Posterior cingulate gyrus (tissue), 11 donors: ENCODE measurements at regions of chr13 and their contacts with region 1.

Region 1: GRCh38 chr13:50081679-50082425 is 66.6 kb downstream of the KCNRG start:
- DNase-seq: peak; percentile 98 to 100 (median 99)

Region 2: DNA sequence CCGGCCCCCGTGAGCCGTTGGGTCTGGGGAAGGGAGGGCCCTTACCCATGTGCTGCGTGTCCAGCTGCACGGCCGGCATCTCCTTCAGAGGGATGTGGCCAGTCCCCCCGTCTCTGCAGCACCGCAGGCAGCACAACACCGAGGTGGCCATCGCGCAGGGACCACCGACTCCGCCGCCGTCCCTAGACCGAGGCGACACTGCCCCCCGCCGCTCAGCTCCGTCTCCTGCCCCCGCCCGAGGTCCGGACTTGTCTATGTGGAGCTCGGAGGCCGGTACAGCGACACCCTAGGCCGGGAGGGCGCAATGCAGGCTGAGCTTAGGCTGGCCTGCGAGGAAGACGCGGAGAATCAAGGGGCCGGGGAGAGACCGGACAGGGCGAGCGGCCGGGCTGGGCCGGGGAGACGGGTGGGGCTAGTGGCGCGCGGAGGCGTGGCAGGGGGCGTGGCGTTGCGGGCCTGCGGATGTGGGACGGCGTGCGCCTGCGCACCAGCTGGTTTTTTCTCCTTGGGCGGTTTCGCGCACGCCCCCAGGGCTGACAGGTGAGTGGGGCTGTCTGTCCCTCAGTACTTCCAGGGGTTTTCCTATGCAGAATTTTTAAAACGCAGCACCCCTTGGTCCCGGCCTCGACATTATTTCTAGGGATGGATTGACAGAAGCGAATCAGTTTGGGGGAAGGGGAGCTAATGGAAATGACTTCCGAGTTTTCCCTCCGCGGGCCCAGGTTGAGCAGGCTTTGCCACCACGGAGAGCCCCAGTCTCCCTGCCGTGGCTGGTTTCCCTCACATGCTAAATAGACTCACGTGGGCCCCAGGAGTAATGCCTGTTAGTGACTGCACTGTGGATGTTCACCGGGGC is 145.5 kb before region 1 on chr13 and contains the start of gene SPRYD7:
- intact Hi-C with region 1: loop called (anchors 5 kb)
- DNase-seq: peak; percentile 95 to 100 (median 98)

Region 3: DNA sequence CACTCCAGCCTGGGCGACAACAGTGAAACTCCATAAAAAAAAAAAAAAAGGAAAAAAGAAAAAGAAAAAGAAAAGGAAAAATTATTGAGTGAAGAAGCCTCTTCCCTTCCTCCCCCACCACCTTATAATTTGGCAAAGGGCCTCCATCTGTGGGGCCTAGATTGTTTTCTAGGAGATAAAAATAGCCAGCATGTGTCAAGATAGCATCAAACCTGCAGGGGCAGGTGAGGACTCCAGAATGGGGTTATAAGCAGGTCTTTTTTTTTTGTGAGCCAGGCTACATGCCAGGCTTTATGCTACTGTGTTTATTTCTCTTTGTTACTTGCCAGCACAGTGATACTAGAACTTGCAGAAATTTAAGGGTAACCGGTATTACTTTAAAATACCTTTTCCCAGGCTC is 96.7 kb before region 1 on chr13:
- intact Hi-C with region 1: no loop called
- DNase-seq: no peak

Region 4: DNA sequence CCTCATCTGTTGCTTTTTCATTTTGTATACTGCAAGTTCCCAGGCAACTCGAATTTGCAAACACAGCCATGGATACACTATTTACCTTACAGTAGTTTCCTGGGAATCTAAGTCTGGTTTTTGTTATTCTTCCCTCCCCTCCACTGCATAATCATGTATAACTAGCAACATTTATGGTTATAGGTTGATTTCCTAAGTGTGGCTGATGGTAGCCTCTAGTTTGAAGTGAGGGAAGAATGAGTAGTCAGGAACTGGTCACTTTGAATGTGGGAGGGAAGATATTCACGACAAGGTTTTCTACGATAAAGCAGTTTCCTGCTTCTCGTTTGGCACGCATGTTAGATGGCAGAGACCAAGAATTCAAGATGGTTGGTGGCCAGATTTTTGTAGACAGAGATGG is 66.6 kb before region 1 on chr13 and contains the start of gene KCNRG:
- intact Hi-C with region 1: loop called (anchors 5 kb)
- DNase-seq: no peak

Region 5: GRCh38 chr13:50026788-50027473 is 54.9 kb before region 1 on chr13:
- intact Hi-C with region 1: no loop called
- DNase-seq: no peak

Region 6: DNA sequence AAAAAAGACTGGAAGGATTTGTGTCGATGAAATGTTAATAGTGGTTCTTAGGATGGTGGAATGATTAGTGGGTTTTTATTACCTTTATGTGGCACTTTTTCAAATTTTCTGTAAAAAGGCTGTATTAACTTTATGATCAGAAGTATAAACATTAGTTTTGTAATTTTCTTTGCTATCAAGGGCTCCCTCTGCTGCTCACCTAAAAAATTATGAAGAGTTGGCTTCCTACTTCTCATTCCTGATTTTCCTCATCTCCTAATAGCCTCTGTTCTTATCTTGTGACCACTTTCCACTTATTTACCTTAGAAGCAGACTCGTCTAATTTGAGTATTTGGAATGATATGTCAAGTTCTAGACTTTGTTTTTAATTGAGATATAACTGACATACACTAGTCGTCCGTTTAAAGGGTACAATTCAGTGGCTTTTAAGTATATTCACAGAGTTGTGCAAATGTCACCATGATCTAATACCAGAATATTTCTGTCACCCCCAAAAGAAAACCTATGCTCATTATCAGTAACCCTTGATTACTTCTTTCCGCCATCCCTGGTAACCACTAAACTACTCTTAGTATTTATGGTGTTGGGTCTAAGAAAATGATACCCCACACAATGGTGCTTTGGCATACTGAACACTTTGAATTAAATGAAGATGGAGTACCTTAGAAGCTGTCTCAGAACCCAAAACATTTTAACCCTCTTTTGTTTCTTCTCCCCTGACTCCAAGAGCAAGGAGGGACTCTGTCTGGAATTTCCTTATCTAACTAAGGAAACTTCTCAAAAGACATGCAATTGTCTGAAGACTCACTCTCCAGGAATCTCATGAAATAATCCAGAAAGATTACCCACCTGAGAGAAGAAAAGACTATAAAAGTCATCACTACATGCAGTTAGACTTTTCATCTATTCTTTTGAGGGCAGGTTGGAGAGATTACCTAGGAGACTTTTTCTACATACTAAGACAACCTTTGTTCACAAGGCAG is 450.4 kb after region 1 on chr13:
- intact Hi-C with region 1: loop called (anchors 5 kb)
- DNase-seq: no peak

Region 7: GRCh38 chr13:50911937-50912795 is 830.3 kb after region 1 on chr13:
- intact Hi-C with region 1: loop called (anchors 5 kb)
- DNase-seq: peak; percentile 72 to 97 (median 90)